ENCODE measurements at regions of chr16 and their contacts with region 1.

Region 1: GRCh38 chr16:69396187-69397061 is 10.6 kb upstream of the TERF2 start:
- DNase-seq: no peak
- ATAC-seq: peak; percentile 89
- H3K4me3 ChIP-seq: no peak overlapping the region
- H3K27ac ChIP-seq: peak overlapping the region; percentile 79
- H3K4me1 ChIP-seq: peaks cover 39% of the 10 kb centered on the region
- H3K27me3 ChIP-seq: no peaks in the 10 kb centered on the region
- CTCF ChIP-seq: peak; percentile 73

Region 2: DNA sequence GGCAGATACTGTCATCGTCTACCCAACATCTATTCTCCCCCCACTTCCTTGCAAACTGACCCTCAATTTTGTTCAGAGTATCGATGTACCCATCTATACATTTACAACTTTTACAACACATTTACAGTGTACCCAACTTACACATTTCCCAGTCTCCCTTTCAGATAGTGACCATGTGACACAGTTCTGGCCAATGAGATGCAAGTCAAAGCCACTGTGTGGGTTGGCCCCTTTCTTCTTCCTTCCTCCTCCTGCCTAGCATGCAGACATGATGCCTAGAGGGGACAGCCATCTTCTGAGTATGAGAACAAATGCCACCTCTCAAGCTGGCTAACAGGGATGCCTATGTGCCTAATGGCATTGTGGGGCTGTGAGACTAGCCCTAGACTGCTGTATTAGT is 158.1 kb after region 1 on chr16:
- intact Hi-C with region 1: no loop called
- DNase-seq: no peak
- ATAC-seq: no peak
- H3K4me3 ChIP-seq: no peak overlapping the region
- H3K27ac ChIP-seq: no peak overlapping the region
- H3K4me1 ChIP-seq: no peaks in the 10 kb centered on the region
- H3K27me3 ChIP-seq: no peaks in the 10 kb centered on the region
- CTCF ChIP-seq: no peak

Region 3: GRCh38 chr16:69565671-69566239 is 169.3 kb after region 1 on chr16 and contains the start of gene NFAT5:
- intact Hi-C with region 1: loop called (anchors 10 kb)
- DNase-seq: peak; percentile 94
- ATAC-seq: peak; percentile 98
- H3K4me3 ChIP-seq: peak within 1 kb of the TSS; percentile 86
- H3K27ac ChIP-seq: peak within 1 kb of the TSS; percentile 99
- H3K4me1 ChIP-seq: peaks cover 34% of the 10 kb centered on the region
- H3K27me3 ChIP-seq: no peaks in the 10 kb centered on the region
- CTCF ChIP-seq: peak; percentile 15
- total RNA-seq, gene NFAT5: 62.3 TPM

Region 4: GRCh38 chr16:69600202-69600601 is 203.8 kb after region 1 on chr16:
- intact Hi-C with region 1: no loop called
- DNase-seq: no peak
- ATAC-seq: peak; percentile 58
- H3K4me3 ChIP-seq: no peak overlapping the region
- H3K27ac ChIP-seq: no peak overlapping the region
- H3K4me1 ChIP-seq: no peaks in the 10 kb centered on the region
- H3K27me3 ChIP-seq: no peaks in the 10 kb centered on the region
- CTCF ChIP-seq: no peak